IMR-90 (cell line): ENCODE measurements at regions of chr10 and their contacts with region 1.

Region 1: GRCh38 chr10:80504158-80504811 is 33.4 kb upstream of the SH2D4B start:
- DNase-seq: no peak
- ATAC-seq: no peak
- H3K4me3 ChIP-seq: no peak overlapping the region
- H3K27ac ChIP-seq: no peak overlapping the region
- H3K4me1 ChIP-seq: peaks cover 42% of the 10 kb centered on the region
- H3K27me3 ChIP-seq: no peaks in the 10 kb centered on the region
- CTCF ChIP-seq: no peak
- POLR2A ChIP-seq: no peak
- RAD21 ChIP-seq: no peak

Region 2: GRCh38 chr10:80100111-80100510 is 404.2 kb before region 1 on chr10:
- CTCF ChIA-PET with region 1: no interaction called
- POLR2A ChIA-PET with region 1: no interaction called
- dilution Hi-C with region 1: no loop called
- in situ Hi-C with region 1: no loop called
- intact Hi-C with region 1: no loop called
- DNase-seq: no peak
- ATAC-seq: no peak
- H3K4me3 ChIP-seq: no peak overlapping the region
- H3K27ac ChIP-seq: no peak overlapping the region
- H3K4me1 ChIP-seq: no peaks in the 10 kb centered on the region; the same call in 1 of the 2 replicates
- H3K27me3 ChIP-seq: no peaks in the 10 kb centered on the region; the same call in 1 of the 2 replicates
- CTCF ChIP-seq: no peak
- POLR2A ChIP-seq: no peak
- RAD21 ChIP-seq: no peak

Region 3: DNA sequence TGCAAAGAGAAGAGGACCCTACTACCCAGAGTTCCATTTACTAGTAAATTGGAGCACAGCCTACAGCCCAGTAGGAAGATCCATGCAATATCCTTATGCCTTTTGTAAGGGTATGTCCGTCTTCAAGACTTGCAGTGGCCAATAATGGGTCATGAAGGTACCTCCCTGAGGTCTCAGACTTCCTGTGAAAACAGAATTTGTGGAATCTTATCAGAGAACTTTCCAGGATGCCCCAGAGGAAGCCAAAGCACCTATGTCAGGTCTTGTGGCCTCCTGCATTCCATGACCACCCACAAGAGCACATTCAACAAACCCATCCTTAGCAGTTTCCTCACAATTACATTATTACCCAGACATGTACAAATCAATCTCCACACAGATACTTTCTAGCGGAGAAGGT is 114.5 kb before region 1 on chr10:
- CTCF ChIA-PET with region 1: interaction called, 6 read pairs
- POLR2A ChIA-PET with region 1: no interaction called
- dilution Hi-C with region 1: no loop called
- in situ Hi-C with region 1: no loop called
- intact Hi-C with region 1: loop called (anchors 2 kb)
- DNase-seq: no peak
- ATAC-seq: no peak
- H3K4me3 ChIP-seq: no peak overlapping the region
- H3K27ac ChIP-seq: no peak overlapping the region
- H3K4me1 ChIP-seq: no peaks in the 10 kb centered on the region
- H3K27me3 ChIP-seq: no peaks in the 10 kb centered on the region; the same call in 1 of the 2 replicates
- CTCF ChIP-seq: no peak
- POLR2A ChIP-seq: no peak
- RAD21 ChIP-seq: no peak

Region 4: GRCh38 chr10:80453701-80454513 is 50.4 kb before region 1 on chr10 and contains the start of gene TSPAN14:
- CTCF ChIA-PET with region 1: interaction called, 20 read pairs
- POLR2A ChIA-PET with region 1: interaction called, 3 read pairs
- dilution Hi-C with region 1: no loop called
- in situ Hi-C with region 1: loop called (anchors 5 kb)
- intact Hi-C with region 1: loop called (anchors 1 kb)
- DNase-seq: peak; percentile 79
- ATAC-seq: peak; percentile 89
- H3K4me3 ChIP-seq: peak within 1 kb of the TSS; percentile 73
- H3K27ac ChIP-seq: peak within 1 kb of the TSS; percentile 83
- H3K4me1 ChIP-seq: peaks cover 13% of the 10 kb centered on the region
- H3K27me3 ChIP-seq: no peaks in the 10 kb centered on the region
- CTCF ChIP-seq: no peak
- POLR2A ChIP-seq: no peak; the same call in 1 of the 2 replicates
- RAD21 ChIP-seq: 0 out of 2 replicates have a peak, but pooled peaks have one; percentile 4
- total RNA-seq, gene TSPAN14: 13.3 and 18.5 TPM in 2 replicates

Region 5: DNA sequence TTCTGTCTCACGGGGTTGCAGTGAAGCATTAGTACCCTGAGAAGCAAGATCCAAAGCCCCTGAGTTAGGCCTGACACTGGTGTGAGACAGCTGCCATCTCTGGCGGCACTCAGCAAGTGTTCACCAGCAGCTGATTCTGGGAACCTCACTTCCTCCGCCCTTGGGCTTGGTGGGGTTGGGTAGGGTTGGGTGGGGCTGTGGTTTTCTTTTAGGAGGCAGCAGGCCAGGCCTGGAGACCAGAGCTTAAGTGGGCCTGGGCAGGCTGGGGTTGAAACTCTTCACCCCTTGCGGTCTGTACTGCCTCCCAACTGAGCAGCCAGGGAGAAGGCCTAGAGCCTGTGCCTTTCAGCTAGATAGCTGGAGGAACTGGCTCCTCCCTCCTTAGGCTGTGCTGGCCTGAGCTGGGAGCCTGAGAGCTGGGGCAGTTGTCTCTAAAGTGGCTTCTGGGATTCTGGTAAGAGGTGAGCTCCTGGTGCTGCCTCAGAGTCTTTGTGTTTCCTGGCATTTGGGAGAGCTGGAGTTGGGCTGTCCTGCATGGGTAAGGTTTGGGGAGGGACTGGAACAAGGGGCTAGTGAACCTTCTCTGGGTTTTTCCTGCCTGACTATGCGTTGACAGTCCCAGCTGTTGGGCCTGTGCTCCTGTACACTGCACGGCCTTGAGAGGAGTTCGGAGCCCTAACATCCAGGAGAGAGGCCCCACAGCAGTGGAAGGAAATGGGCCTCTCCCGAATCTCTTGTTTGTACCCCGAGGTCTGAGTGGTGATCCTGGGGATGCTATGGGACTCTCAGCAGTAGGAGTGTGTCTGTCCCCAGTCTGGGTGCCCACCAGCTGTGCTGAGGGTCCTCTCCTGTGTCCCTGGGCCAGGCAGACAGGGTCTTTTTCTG is 45.0 kb before region 1 on chr10:
- CTCF ChIA-PET with region 1: interaction called, 26 read pairs
- POLR2A ChIA-PET with region 1: interaction called, 3 read pairs
- dilution Hi-C with region 1: no loop called
- in situ Hi-C with region 1: loop called (anchors 5 kb)
- intact Hi-C with region 1: loop called (anchors 1 kb)
- DNase-seq: no peak
- ATAC-seq: peak; percentile 16; the same call in 1 of the 2 replicates
- H3K4me3 ChIP-seq: no peak overlapping the region
- H3K27ac ChIP-seq: 0 out of 2 replicates have a peak overlapping the region, but pooled peaks have one; percentile 9
- H3K4me1 ChIP-seq: peaks cover 47% of the 10 kb centered on the region
- H3K27me3 ChIP-seq: no peaks in the 10 kb centered on the region
- CTCF ChIP-seq: no peak
- POLR2A ChIP-seq: no peak
- RAD21 ChIP-seq: no peak

Region 6: DNA sequence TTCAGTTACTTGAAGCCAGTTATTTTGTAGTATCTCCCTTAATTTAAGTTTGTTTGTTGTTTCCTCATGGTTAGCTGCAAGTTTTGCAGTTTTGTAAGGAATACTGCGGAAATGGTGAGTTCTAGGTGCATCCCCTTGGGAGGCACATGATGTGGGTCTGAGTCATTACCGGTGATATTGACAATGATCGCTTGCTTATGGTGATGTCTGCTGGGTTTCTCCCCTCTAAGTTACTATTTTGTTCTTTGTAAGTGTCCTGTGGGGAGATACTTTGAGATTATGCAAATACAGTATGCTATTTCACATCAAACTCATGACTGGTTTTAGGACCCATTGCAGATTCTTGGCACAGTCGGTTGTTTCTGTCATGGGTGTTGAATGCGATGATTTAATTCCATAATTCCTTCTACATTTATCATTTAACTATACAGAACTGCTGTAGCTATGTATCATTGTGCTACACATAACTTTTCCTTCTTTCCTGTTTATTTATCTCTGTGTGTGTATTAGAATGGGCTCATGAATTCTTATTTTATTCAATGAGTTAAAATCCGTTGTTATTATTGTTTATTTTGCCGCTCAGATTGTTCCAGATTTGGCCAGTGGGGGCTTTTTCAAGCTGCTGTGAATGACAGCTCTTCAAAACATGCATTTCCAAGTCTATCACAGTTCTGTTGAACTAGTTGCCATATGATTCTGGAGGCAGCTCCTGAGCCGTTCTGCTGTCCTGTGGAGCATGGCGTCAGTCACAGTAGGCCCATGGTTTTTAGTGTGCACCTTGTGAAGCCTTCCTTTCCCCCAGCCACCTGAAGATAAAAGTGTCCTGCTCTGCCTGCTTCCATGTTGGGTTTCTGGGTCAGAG is 31.8 kb before region 1 on chr10:
- CTCF ChIA-PET with region 1: interaction called, 11 read pairs
- POLR2A ChIA-PET with region 1: no interaction called
- dilution Hi-C with region 1: no loop called
- in situ Hi-C with region 1: no loop called
- intact Hi-C with region 1: no loop called
- DNase-seq: peak; percentile 85
- ATAC-seq: peak; percentile 64
- H3K4me3 ChIP-seq: no peak overlapping the region
- H3K27ac ChIP-seq: peak overlapping the region; percentile 48
- H3K4me1 ChIP-seq: peaks cover 27% of the 10 kb centered on the region
- H3K27me3 ChIP-seq: no peaks in the 10 kb centered on the region
- CTCF ChIP-seq: no peak
- POLR2A ChIP-seq: no peak
- RAD21 ChIP-seq: no peak